ENCODE measurements at regions of chr17 and their contacts with region 1.

Region 1: GRCh38 chr17:75250009-75250471 is 11.4 kb downstream of the GGA3 start:
- DNase-seq: peak; percentile 46
- ATAC-seq: peak; percentile 88
- H3K4me3 Mint-ChIP-seq: peak overlapping the region; percentile 76
- H3K27ac Mint-ChIP-seq: peak overlapping the region; percentile 87
- H3K4me1 Mint-ChIP-seq: peaks cover 65% of the 10 kb centered on the region
- H3K27me3 Mint-ChIP-seq: no peaks in the 10 kb centered on the region
- CTCF ChIP-seq: no peak

Region 2: GRCh38 chr17:75238684-75239191 is 11.3 kb before region 1 on chr17:
- CTCF ChIA-PET with region 1: interaction called, 5 read pairs
- POLR2A ChIA-PET with region 1: interaction called, 13 read pairs
- intact Hi-C with region 1: no loop called
- DNase-seq: peak; percentile 53
- ATAC-seq: peak; percentile 72
- H3K4me3 Mint-ChIP-seq: peak overlapping the region; percentile 57
- H3K27ac Mint-ChIP-seq: peak overlapping the region; percentile 83
- H3K4me1 Mint-ChIP-seq: peaks cover 35% of the 10 kb centered on the region
- H3K27me3 Mint-ChIP-seq: no peaks in the 10 kb centered on the region
- CTCF ChIP-seq: no peak

Measured in activated B cell treated with CpG ODN at 0.5 μM for 24 hours (primary cell).